ENCODE measurements at regions of chr5 and their contacts with region 1.

Region 1: GRCh38 chr5:173315495-173316350 is 12.5 kb downstream of the STC2 start:
- DNase-seq: peak; percentile 80

Region 2: DNA sequence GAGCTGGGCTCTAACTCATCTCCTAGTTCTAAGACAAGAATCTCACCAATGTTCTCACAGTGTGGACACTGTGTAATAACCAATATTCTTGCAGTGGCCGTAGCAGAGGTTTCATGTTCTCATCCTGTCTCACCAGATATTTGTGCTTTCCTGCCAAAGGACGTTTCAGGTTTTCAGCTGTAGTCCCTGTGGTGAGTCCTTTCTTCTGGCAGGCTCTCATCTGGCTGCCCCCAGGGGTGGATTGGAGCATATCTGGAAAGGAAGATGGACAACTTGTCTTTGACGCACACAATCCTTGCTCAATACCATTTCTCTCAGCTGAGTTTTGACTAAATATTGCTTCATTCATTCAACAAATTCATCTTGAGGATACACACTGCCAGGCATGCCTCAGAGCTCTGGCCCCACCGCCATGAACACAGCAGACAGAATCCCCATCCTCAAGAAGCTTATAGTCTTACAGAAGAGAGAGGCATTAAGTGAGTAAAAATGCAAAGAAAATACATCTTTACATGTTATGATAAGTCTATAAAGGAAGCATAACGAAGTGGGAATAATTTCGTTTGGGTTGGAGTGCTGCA is 708.4 kb before region 1 on chr5:
- CTCF ChIA-PET with region 1: no interaction called
- POLR2A ChIA-PET with region 1: no interaction called
- DNase-seq: no peak

Region 3: GRCh38 chr5:173293817-173294672 is 21.7 kb before region 1 on chr5:
- CTCF ChIA-PET with region 1: interaction called, 10 read pairs
- POLR2A ChIA-PET with region 1: interaction called, 10 read pairs
- DNase-seq: peak; percentile 87

Region 4: DNA sequence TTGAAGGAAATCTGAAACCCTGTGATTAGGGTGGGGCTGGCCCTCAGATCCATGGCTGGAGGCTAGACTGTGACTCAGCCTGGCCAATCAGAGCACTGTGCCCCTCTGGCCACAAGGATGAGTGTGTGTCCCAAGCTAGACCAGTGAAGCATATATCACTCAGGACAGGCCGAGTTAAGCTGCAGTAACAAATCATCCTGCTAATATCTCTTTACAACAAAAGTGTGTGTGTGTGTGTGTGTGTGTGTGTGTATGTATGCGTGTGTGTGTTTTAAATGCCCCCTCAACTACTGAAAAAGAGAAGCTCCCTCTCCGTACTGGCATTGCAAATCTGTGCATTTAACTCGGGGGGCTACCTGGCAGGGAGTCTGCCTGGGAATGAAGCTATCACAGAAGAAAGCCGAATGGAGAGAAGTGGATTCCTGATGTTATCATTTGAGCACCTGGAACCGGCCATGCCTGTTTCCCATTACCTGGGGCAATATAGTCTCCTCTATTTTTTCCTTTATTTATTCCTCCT is 13.1 kb before region 1 on chr5:
- CTCF ChIA-PET with region 1: interaction called, 3 read pairs
- POLR2A ChIA-PET with region 1: interaction called, 16 read pairs
- DNase-seq: peak; percentile 78

Measured in HEK293T (cell line).